ENCODE measurements at regions of chr16 and their contacts with region 1.

Region 1: DNA sequence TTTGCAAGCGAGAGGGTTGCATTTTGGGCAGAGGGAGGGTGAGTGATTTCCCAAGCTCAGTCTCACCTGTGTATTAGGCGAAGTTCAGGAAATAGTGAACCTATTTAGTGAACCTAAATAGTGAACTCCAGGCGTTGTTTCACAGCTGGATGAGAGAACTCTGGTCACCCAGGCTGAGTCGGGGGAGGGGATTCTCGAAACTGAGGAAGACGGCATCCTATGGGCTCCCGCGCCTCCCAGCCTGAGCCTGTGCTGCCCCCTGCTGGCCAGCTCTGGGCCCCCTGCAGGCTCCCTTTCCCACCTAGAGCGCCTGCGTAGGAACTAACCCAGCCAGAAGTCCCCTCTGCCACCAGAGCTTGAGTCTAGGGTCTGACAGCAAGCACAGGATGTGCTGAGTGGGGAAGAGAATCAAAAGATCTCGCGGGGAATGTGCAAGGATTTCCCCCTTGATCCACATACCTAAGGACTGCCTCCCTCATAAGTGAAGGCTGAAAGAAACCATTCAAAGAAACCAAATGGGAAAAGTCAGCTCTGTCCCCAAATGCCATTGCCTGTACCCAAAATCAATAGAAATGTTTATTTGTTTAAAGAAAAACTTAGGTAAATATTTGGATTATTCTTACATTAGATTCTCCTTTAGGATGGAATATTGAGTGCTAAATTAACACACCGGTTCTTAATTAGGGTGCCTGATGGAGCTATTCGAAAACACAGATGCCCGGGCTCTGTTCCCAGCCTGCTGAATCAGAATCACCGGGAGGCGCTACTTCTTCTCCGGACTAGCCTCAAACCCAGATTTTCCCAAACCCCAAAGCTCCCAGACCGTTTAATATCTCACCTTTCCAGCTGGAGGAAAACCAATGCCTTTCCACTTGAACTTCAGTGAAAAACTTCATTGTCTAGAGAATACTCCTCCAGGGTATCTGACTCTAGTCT is 14.8 kb upstream of the MARVELD3 start:
- DNase-seq: peak; percentile 86 to 94
- H3K4me3 ChIP-seq: no peak overlapping the region
- H3K4me3 Mint-ChIP-seq: no peak overlapping the region
- H3K27ac Mint-ChIP-seq: no peak overlapping the region
- H3K4me1 ChIP-seq: no peaks in the 10 kb centered on the region
- H3K4me1 Mint-ChIP-seq: no peaks in the 10 kb centered on the region
- H3K27me3 ChIP-seq: no peaks in the 10 kb centered on the region
- H3K27me3 Mint-ChIP-seq: peaks cover 3% of the 10 kb centered on the region
- CTCF ChIP-seq: peak; percentile 99 to 100

Region 2: DNA sequence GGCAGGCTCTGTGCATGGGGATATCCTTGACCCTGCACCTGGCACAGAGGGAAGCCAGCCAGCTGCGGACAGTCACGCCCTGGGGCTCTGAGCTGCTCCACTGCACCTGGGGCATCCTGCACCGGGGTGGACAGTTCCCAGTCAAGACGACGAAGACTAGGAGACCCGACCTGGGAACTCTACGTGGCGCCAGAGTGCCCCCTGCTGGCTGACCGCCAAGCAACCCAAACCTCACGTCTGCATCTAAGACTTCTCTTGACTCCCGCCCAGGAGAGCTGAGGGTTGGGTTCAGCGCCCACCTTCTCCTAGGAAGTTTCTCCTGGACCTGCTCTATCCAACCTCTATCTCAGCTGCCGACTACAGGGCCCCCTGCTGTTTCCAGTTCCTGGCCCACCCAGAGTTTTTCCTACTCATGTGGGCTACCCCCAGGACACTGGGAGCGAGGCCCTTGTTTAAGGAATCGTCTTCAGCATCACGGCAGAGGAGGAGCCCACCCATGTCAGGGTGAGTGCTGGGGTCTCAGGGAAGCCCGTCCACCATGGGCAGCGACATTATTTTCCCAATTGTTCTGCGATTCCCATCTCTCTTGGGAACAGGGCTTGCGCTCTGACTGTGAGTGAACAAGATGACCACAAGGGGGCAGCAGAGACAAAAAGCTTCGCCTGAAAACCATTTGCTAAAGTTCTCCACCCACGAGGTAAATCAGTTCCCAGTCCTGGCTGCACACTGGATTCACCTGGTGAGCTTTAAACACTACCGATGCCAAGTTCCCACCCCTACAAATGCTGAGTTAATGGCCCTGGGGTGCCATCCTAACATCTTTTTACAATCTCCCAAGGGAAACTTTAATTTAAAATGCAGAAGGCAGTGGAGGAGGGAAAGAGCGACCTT is 198.7 kb before region 1 on chr16:
- CTCF ChIA-PET with region 1: interaction called, 5 read pairs
- POLR2A ChIA-PET with region 1: no interaction called
- intact Hi-C with region 1: loop called (anchors 1 kb)
- DNase-seq: peak; percentile 74 to 81
- H3K4me3 ChIP-seq: no peak overlapping the region
- H3K4me3 Mint-ChIP-seq: no peak overlapping the region
- H3K27ac Mint-ChIP-seq: no peak overlapping the region
- H3K4me1 ChIP-seq: peaks cover 9% of the 10 kb centered on the region; the same call in 1 of the 2 replicates
- H3K4me1 Mint-ChIP-seq: no peaks in the 10 kb centered on the region
- H3K27me3 ChIP-seq: no peaks in the 10 kb centered on the region; the same call in 1 of the 2 replicates
- H3K27me3 Mint-ChIP-seq: peaks cover 36% of the 10 kb centered on the region
- CTCF ChIP-seq: peak; percentile 84 to 92

Region 3: GRCh38 chr16:71499775-71500364 is 111.3 kb before region 1 on chr16:
- CTCF ChIA-PET with region 1: interaction called, 13 read pairs
- POLR2A ChIA-PET with region 1: no interaction called
- intact Hi-C with region 1: no loop called
- DNase-seq: peak; percentile 48 to 70
- H3K4me3 ChIP-seq: no peak overlapping the region
- H3K4me3 Mint-ChIP-seq: no peak overlapping the region
- H3K27ac Mint-ChIP-seq: no peak overlapping the region
- H3K4me1 ChIP-seq: no peaks in the 10 kb centered on the region
- H3K4me1 Mint-ChIP-seq: no peaks in the 10 kb centered on the region
- H3K27me3 ChIP-seq: no peaks in the 10 kb centered on the region
- H3K27me3 Mint-ChIP-seq: peaks cover 8% of the 10 kb centered on the region
- CTCF ChIP-seq: peak; percentile 76

Region 4: GRCh38 chr16:71564155-71564967 is 46.8 kb before region 1 on chr16:
- CTCF ChIA-PET with region 1: interaction called, 124 read pairs
- POLR2A ChIA-PET with region 1: interaction called, 9 read pairs
- intact Hi-C with region 1: loop called (anchors 1 kb)
- DNase-seq: no peak
- H3K4me3 ChIP-seq: peak overlapping the region; percentile 44
- H3K4me3 Mint-ChIP-seq: peak overlapping the region; percentile 94
- H3K27ac Mint-ChIP-seq: peak overlapping the region; percentile 97
- H3K4me1 ChIP-seq: peaks cover 8% of the 10 kb centered on the region; the same call in 1 of the 2 replicates
- H3K4me1 Mint-ChIP-seq: peaks cover 20% of the 10 kb centered on the region
- H3K27me3 ChIP-seq: no peaks in the 10 kb centered on the region
- H3K27me3 Mint-ChIP-seq: no peaks in the 10 kb centered on the region
- CTCF ChIP-seq: no peak

Region 5: GRCh38 chr16:71645453-71645852 is 34.2 kb after region 1 on chr16:
- CTCF ChIA-PET with region 1: no interaction called
- POLR2A ChIA-PET with region 1: no interaction called
- intact Hi-C with region 1: loop called (anchors 1 kb)
- DNase-seq: peak in 1 of 2 experiments; percentile 57
- H3K4me3 ChIP-seq: no peak overlapping the region
- H3K4me3 Mint-ChIP-seq: no peak overlapping the region
- H3K27ac Mint-ChIP-seq: no peak overlapping the region
- H3K4me1 ChIP-seq: no peaks in the 10 kb centered on the region
- H3K4me1 Mint-ChIP-seq: no peaks in the 10 kb centered on the region
- H3K27me3 ChIP-seq: no peaks in the 10 kb centered on the region
- H3K27me3 Mint-ChIP-seq: no peaks in the 10 kb centered on the region
- CTCF ChIP-seq: peak; percentile 74 to 75